ENCODE measurements at regions of chr15 and their contacts with region 1.

Region 1: DNA sequence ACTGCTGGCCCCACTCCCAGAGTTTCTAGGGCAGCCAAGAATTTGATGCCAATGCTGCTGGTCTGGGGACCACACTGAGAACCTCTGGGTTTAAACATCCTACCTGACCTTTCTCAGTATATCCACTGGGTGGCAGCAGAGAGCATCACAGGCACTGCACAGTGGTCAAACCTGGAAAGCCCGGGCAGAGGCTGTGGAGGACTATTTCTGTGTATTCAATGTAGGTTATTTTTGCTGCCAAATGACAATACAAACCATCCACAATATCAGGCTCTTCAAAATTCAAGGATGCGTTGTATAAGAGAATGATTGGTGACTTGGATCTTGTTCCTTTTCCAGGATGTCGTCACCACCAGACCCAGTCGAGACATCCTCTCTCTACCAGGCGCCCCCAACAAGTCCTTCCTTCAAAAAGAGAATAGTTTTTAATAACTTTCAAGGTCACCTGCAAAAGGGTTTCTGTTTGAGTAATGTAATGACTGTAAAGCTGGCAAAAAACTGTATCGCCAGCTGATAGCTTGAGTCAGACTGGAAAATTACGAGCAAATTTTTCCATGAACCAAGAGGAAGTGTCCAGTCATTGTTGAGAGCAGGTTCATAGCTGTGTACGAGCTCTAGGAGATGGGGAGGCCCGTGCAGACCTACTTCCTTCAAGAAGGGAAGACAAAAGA is 30.5 kb upstream of the MYZAP start:
- DNase-seq: peak; percentile 71
- ATAC-seq: peak; percentile 82
- H3K4me3 Mint-ChIP-seq: no peak overlapping the region
- H3K27ac Mint-ChIP-seq: peak overlapping the region; percentile 71
- H3K4me1 Mint-ChIP-seq: peaks cover 38% of the 10 kb centered on the region
- H3K27me3 Mint-ChIP-seq: peaks cover 21% of the 10 kb centered on the region
- CTCF ChIP-seq: peak; percentile 89

Region 2: DNA sequence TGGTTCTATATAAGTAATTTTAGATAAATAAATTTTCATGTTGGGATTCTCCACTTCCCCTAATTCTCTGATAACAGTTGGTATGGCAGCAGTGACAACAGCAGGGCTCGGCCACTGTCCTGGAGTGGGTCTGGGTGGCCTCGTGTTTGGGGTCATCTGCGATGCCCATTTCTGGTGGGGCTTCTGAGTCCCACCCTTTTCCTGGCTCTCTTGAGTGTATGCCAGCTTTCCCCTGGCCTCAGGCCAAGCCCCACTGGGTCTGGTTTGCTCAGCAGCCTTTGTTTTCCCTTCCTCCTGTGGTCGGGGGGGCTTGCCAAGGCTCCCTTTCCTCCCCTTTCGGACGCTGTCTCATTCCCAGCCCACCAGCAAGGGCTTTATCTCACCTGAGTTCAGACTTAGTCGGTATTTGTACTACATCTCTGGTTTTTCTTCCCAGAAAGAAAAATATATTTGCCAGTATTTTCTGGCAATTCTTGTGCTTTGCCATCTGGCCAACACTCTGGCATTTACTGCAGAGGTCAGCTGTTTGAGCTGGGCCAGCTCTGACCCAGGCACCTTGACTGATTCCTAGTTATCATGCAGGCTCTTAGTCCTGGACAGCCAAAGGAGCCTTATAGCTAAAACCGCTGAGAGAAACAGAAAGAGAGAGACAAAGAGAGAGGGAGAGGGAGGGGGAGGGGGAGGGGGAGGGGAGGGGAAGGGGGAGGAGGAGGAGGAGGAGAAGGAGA is 65.7 kb after region 1 on chr15:
- CTCF ChIA-PET with region 1: no interaction called
- POLR2A ChIA-PET with region 1: no interaction called
- intact Hi-C with region 1: no loop called
- DNase-seq: no peak
- ATAC-seq: no peak
- H3K4me3 Mint-ChIP-seq: no peak overlapping the region
- H3K27ac Mint-ChIP-seq: no peak overlapping the region
- H3K4me1 Mint-ChIP-seq: no peaks in the 10 kb centered on the region
- H3K27me3 Mint-ChIP-seq: peaks cover 3% of the 10 kb centered on the region
- CTCF ChIP-seq: no peak

Region 3: GRCh38 chr15:57640935-57641682 is 79.9 kb after region 1 on chr15:
- CTCF ChIA-PET with region 1: interaction called, 11 read pairs
- POLR2A ChIA-PET with region 1: no interaction called
- intact Hi-C with region 1: loop called (anchors 5 kb)
- DNase-seq: peak; percentile 41
- ATAC-seq: peak; percentile 58
- H3K4me3 Mint-ChIP-seq: no peak overlapping the region
- H3K27ac Mint-ChIP-seq: no peak overlapping the region
- H3K4me1 Mint-ChIP-seq: no peaks in the 10 kb centered on the region
- H3K27me3 Mint-ChIP-seq: peaks cover 6% of the 10 kb centered on the region
- CTCF ChIP-seq: peak; percentile 42

Region 4: GRCh38 chr15:57706405-57707209 is 145.4 kb after region 1 on chr15 and contains the start of gene POLR2M:
- CTCF ChIA-PET with region 1: interaction called, 12 read pairs
- POLR2A ChIA-PET with region 1: no interaction called
- intact Hi-C with region 1: no loop called
- DNase-seq: peak; percentile 97
- ATAC-seq: peak; percentile 95
- H3K4me3 Mint-ChIP-seq: peak within 1 kb of the TSS; percentile 94
- H3K27ac Mint-ChIP-seq: peak within 1 kb of the TSS; percentile 93
- H3K4me1 Mint-ChIP-seq: peaks cover 72% of the 10 kb centered on the region
- H3K27me3 Mint-ChIP-seq: peaks cover 1% of the 10 kb centered on the region
- CTCF ChIP-seq: no peak
- total RNA-seq, gene POLR2M: 72.5 to 85.0 TPM